Activated CD4-positive, alpha-beta memory T cell treated with anti-CD3 and anti-CD28 coated beads for 36 hours (primary cell): ENCODE measurements at regions of chr14 and their contacts with region 1.

Region 1: DNA sequence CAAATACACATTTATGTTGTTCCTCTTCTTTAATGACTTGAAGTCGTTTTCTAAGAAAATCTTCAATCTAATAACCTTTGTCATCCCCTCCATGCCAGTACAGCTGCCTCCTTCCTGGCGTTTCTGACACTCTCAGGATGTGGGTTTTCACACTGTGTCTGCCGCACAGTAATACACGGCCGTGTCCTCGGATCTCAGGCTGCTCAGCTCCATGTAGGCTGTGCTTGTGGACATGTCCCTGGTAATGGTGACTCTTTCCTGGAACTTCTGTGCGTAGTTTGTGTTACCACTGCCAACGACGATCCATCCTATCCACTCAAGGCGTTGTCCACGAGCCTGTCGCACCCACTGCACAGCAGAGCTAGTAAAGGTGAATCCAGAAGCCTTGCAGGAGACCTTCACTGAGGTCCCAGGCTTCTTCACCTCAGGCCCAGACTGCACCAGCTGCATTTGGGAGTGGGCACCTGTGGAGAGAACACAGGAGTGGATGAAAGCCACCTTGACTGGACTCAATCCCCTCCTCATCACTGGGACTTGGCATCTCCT is 1095.9 kb downstream of the TMEM121 start:
- DNase-seq: peak; percentile 49
- H3K4me3 Mint-ChIP-seq: no peak overlapping the region
- H3K27ac Mint-ChIP-seq: no peak overlapping the region
- H3K4me1 Mint-ChIP-seq: peaks cover 10% of the 10 kb centered on the region
- H3K27me3 Mint-ChIP-seq: peaks cover 16% of the 10 kb centered on the region

Region 2: DNA sequence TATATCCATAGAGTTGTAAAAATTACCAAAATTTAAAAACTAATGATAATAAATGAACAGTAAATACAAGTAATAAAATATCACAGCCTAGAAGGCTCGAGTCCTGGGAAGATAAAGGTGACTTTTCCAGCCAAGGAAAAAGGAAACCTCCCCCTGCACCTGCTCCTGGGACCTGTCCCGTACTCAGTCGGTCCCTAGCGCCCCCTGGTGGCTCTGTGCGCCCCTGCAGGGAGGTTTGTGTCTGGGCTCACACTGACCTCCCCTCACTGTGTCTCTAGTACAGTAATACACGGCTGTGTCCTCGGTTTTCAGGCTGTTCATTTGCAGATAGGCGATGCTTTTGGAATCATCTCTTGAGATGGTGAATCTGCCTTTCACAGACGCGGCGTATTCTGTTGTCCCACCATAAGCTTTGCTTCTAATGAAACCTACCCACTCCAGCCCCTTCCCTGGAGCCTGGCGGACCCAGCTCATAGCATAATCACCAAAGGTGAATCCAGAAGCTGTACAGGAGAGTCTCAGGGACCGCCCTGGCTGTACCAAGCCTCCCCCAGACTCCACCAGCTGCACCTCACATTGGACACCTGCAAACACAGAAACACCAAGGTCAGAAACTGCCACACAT is 65.5 kb before region 1 on chr14:
- CTCF ChIA-PET with region 1: interaction called, 10 read pairs
- POLR2A ChIA-PET with region 1: no interaction called
- intact Hi-C with region 1: no loop called
- DNase-seq: peak; percentile 84
- H3K4me3 Mint-ChIP-seq: no peak overlapping the region
- H3K27ac Mint-ChIP-seq: no peak overlapping the region
- H3K4me1 Mint-ChIP-seq: no peaks in the 10 kb centered on the region
- H3K27me3 Mint-ChIP-seq: peaks cover 18% of the 10 kb centered on the region

Region 3: GRCh38 chr14:106586098-106586704 is 36.1 kb before region 1 on chr14:
- CTCF ChIA-PET with region 1: interaction called, 4 read pairs
- POLR2A ChIA-PET with region 1: no interaction called
- intact Hi-C with region 1: loop called (anchors 5 kb)
- DNase-seq: peak; percentile 80
- H3K4me3 Mint-ChIP-seq: no peak overlapping the region
- H3K27ac Mint-ChIP-seq: no peak overlapping the region
- H3K4me1 Mint-ChIP-seq: no peaks in the 10 kb centered on the region
- H3K27me3 Mint-ChIP-seq: peaks cover 11% of the 10 kb centered on the region

Region 4: DNA sequence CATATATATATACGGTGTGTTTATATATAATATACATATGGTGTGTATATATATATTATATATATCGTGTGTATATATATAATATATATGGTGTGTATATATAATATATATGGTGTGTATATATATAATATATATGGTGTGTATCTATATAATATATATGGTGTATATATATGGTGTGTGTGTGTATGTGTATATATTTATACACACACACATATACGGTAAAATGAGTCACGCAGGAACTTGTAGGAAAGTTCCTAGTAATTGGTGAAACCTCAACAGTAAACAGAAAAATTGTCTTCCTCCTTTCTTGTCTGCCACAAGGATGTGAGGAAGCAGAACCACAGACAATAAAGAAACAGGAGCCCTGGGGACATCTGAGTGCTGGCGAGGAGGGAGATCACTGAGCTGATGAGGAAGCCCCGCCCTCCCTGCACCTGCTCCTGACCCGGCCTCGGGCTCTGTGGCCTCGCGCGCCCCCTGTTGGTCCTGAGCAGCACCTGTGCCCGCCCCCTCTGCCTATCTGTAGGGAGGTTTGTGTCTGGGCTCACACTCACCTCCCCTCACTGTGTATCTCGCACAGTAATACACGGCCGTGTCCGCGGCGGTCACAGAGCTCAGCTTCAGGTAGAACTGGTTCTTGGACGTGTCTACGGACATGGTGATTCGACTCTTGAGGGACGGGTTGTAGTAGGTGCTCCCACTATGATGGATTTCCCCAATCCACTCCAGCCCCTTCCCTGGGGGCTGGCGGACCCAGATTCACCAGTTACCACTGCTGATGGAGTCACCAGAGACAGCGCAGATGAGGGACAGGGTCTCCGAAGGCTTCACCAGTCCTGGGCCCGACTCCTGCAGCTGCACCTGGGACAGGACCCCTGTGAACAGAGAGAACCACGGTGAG is 16.5 kb before region 1 on chr14:
- CTCF ChIA-PET with region 1: interaction called, 42 read pairs
- POLR2A ChIA-PET with region 1: no interaction called
- intact Hi-C with region 1: no loop called
- DNase-seq: peak; percentile 89
- H3K4me3 Mint-ChIP-seq: no peak overlapping the region
- H3K27ac Mint-ChIP-seq: no peak overlapping the region
- H3K4me1 Mint-ChIP-seq: peaks cover 4% of the 10 kb centered on the region
- H3K27me3 Mint-ChIP-seq: peaks cover 52% of the 10 kb centered on the region